Mammary epithelial cell (primary cell): ENCODE measurements at regions of chr2 and their contacts with region 1.

Region 1: GRCh38 chr2:138090330-138090729 is 126.1 kb downstream of the HNMT start:
- DNase-seq: peak; percentile 56
- H3K4me3 ChIP-seq: no peak overlapping the region
- H3K27ac ChIP-seq: no peak overlapping the region
- H3K4me1 ChIP-seq: peaks cover 12% of the 10 kb centered on the region
- H3K27me3 ChIP-seq: no peaks in the 10 kb centered on the region
- CTCF ChIP-seq: peak; percentile 89 to 92

Region 2: GRCh38 chr2:137900421-137901141 is 189.7 kb before region 1 on chr2:
- CTCF ChIA-PET with region 1: no interaction called
- dilution Hi-C with region 1: no loop called
- in situ Hi-C with region 1: no loop called
- intact Hi-C with region 1: no loop called
- DNase-seq: no peak
- H3K4me3 ChIP-seq: no peak overlapping the region
- H3K27ac ChIP-seq: no peak overlapping the region
- H3K4me1 ChIP-seq: no peaks in the 10 kb centered on the region
- H3K27me3 ChIP-seq: peaks cover 4% of the 10 kb centered on the region
- CTCF ChIP-seq: no peak

Region 3: GRCh38 chr2:137910641-137911040 is 179.7 kb before region 1 on chr2:
- CTCF ChIA-PET with region 1: no interaction called
- dilution Hi-C with region 1: no loop called
- in situ Hi-C with region 1: no loop called
- intact Hi-C with region 1: loop called (anchors 1 kb)
- DNase-seq: no peak
- H3K4me3 ChIP-seq: no peak overlapping the region
- H3K27ac ChIP-seq: no peak overlapping the region
- H3K4me1 ChIP-seq: no peaks in the 10 kb centered on the region
- H3K27me3 ChIP-seq: no peaks in the 10 kb centered on the region
- CTCF ChIP-seq: peak; percentile 52 to 69

Region 4: DNA sequence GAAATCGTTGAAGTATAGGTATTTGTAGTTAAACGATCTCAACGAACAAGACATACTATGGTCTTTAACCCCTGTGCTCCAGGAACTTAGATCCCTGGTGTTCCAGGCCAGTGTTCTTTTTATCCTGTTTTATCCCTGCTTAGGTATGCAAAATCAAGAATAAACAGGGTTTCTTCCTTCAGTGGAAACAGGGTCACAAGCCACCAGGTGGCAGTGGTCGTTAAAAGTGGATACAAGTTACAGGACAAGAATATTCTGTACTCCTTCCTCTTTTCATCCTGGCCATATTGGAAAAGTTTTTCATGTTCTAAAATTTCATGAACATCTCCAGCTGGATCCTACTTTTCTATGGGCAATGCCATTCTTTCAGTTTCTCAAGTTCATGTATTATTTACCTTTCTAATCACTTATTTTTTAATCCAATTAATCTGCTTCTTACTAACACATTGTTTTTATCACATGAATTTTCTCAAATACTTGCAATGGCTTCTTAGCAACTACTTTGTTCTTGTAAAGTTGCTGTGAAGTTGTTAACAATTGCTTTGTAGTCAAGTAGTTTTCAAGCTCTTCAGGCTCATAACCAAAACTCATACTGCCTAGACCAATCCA is 142.5 kb before region 1 on chr2:
- CTCF ChIA-PET with region 1: no interaction called
- dilution Hi-C with region 1: no loop called
- in situ Hi-C with region 1: loop called (anchors 5 to 25 kb)
- intact Hi-C with region 1: loop called (anchors 1 kb)
- DNase-seq: peak; percentile 56
- H3K4me3 ChIP-seq: no peak overlapping the region
- H3K27ac ChIP-seq: no peak overlapping the region
- H3K4me1 ChIP-seq: no peaks in the 10 kb centered on the region
- H3K27me3 ChIP-seq: no peaks in the 10 kb centered on the region
- CTCF ChIP-seq: peak; percentile 55 to 74

Region 5: GRCh38 chr2:138355244-138355643 is 264.9 kb after region 1 on chr2:
- CTCF ChIA-PET with region 1: no interaction called
- dilution Hi-C with region 1: no loop called
- in situ Hi-C with region 1: no loop called
- intact Hi-C with region 1: no loop called
- DNase-seq: no peak
- H3K4me3 ChIP-seq: no peak overlapping the region
- H3K27ac ChIP-seq: no peak overlapping the region
- H3K4me1 ChIP-seq: no peaks in the 10 kb centered on the region
- H3K27me3 ChIP-seq: no peaks in the 10 kb centered on the region
- CTCF ChIP-seq: no peak

Region 6: DNA sequence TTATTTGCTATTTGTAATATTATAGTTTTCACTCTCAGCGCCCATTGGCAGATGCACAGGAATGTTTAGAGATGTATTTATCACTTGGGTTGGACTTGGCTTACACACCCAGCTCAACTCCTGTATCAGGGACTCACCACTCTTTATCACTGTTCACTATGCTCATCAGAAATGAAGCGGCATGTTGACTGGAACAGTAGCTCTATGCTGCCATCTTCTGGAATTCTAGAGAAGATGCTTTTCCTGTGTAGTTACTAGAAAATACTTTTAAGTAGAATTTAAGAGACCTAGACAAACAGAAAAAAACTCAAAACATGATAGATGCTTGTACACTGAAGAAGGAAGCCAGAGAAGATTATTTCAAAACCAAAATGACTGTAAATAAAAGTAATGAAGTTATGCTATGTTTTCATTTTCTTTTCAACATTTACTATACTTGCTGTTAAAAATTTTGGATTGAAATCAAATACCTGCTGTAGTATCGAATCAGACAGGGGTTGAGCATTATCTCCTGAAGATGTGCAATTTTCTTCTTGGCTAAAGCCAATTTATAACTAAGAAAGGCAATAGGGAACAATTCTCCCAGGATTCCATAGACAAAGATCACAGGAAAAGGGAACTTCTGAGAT is 737.2 kb after region 1 on chr2:
- CTCF ChIA-PET with region 1: no interaction called
- dilution Hi-C with region 1: no loop called
- in situ Hi-C with region 1: no loop called
- intact Hi-C with region 1: loop called (anchors 2 kb)
- DNase-seq: peak; percentile 54
- H3K4me3 ChIP-seq: no peak overlapping the region
- H3K27ac ChIP-seq: no peak overlapping the region
- H3K4me1 ChIP-seq: no peaks in the 10 kb centered on the region
- H3K27me3 ChIP-seq: no peaks in the 10 kb centered on the region
- CTCF ChIP-seq: peak; percentile 64 to 71